Right ventricle myocardium inferior (tissue), 1 donor: ENCODE measurements at regions of chr10 and their contacts with region 1.

Region 1: DNA sequence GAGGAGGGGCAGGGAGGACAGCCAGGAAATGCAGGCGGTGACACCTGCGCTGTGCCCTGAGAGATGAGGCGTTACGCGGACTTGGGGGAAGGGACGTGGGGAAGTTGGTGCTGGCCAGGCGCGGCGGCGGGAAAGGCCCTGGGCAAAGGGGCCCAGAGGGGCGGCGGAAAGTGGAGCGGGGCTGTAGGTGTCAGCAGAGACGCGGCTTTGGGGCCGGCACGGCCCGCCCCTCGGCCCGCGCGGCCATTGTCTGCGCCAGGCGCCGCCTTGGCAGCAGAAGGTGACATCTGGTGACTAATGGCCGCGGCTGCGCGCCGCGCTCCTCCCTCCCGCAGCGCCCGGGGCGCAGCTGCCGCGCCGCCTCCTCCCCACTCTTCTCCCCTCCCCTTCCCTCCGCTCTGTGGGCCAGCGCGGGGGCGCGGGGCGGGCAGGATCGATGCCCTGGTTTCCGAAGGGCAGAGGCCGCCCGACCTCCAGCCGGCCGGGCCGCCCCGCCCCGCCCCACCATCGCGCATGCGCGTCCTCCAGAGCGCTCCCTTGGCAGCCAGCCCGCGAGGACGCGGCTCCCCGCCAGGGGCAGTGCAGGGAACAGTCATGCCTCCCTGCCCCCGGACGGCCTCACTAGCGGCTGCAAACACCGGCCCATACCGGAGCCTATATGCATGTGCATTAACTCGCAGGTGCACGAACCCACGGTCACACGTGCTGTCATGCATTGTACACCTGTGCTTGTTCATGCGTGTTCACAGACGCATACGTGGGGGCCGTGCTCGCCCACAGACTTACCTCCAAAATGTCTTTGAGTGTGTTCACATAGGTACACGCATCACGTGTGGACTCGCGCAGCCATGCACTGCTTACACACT is 269.6 kb downstream of the RPS24 start:
- DNase-seq: peak; percentile 97
- ATAC-seq: peak; percentile 97

Region 2: GRCh38 chr10:77849039-77849664 is 454.1 kb before region 1 on chr10:
- intact Hi-C with region 1: no loop called
- DNase-seq: no peak
- ATAC-seq: no peak

Region 3: GRCh38 chr10:78047314-78047891 is 255.8 kb before region 1 on chr10:
- intact Hi-C with region 1: loop called (anchors 5 kb)
- DNase-seq: peak; percentile 86
- ATAC-seq: peak; percentile 82

Region 4: GRCh38 chr10:78211561-78212051 is 91.6 kb before region 1 on chr10:
- intact Hi-C with region 1: loop called (anchors 5 kb)
- DNase-seq: no peak
- ATAC-seq: peak; percentile 2

Region 5: DNA sequence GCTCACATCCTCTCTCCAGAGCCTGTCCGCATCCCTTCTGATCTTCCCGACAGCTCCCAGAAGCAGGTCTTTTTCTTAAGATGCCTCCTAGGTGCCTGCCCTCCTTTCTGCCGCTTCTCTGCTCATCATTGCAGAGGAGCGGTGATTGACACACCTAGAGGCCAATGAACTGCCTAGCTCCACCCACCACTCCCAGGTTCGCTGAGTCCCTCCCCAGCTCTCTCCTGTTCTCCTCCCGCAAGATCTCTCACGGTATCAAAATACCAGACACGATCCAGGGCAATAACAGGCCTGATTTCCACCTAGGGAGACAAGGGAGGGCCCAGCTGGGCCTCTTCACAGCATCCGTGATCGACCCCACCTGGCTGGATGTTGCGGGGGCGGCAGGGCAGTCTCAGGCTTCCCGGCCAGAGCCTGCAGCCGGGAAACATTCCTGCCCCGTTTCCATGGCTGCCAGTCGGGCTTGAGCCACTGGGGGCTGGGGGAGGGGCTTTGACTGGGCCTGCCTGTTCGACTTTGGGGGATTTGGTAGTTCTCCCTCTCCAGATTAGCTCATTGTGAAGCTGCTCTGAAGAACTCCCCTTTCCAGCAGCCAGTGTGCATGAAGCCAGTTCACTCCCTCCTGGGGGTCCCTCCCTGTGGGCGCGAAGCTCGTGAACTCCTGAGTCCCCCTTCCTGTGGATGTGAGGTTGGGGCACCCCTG is 103.9 kb after region 1 on chr10:
- intact Hi-C with region 1: loop called (anchors 5 kb)
- DNase-seq: peak; percentile 81
- ATAC-seq: peak; percentile 61

Region 6: DNA sequence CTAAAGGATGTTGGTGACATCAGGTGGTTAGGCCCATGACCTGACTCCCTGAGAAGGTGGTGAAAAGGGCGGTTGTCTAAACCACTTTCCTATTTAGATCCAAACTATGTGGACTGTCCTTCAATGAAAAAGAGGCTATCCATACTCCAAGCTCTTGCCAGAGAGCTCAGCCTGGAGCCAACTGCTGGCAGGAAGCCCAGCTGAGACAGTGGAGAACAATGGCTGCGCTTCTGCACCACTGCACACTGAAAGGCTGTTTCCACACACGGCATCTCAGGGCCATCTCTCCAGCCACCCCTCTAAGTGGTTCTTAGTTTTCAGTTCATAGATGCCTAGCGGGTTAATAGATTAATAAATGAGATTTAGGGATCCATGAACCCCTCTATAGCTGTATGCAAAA is 276.8 kb after region 1 on chr10:
- intact Hi-C with region 1: loop called (anchors 5 kb)
- DNase-seq: peak; percentile 84
- ATAC-seq: peak; percentile 77

Region 7: DNA sequence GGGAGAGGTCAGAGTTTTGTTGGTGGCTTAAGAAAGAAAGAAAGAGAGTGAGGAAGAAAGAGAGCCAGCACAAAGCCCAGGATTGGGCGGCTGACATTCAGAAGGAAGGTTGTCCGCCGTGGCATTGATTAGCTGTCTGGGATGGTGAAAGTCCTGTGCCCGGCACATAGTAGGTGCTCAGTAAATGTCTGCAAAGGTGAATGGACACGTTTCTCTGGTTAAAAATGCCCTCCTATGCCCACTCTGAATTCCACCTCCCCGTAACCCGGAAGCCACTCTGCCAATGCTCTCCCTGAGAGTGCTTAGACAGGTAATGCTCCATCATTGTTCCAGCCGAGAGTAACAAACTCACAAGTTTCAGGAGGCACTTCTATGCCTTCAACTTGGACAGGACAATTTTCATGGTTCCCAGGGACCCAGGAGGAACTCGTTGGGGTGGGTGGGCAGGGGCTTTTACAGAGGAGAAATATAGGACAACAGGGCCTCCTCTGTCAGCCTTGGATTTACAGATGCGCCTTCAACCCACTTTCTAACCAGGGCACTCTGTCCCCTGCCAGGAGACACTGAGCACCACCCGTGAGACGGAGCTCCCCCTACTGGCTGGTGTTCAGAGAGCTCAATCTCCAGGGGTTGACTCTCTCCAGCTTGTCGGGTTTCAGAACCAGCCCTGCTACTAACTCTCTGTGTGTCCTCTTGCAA is 354.1 kb after region 1 on chr10:
- intact Hi-C with region 1: loop called (anchors 10 kb)
- DNase-seq: peak; percentile 78
- ATAC-seq: peak; percentile 85

Region 8: GRCh38 chr10:79022565-79023230 is 719.5 kb after region 1 on chr10:
- intact Hi-C with region 1: loop called (anchors 5 kb)
- DNase-seq: peak; percentile 79
- ATAC-seq: peak; percentile 51